ENCODE measurements at regions of chr9 and their contacts with region 1.

Region 1: GRCh38 chr9:6412487-6413364 is at the start of gene UHRF2:
- DNase-seq: peak; percentile 99 to 100
- ATAC-seq: peak; percentile 97
- H3K4me3 ChIP-seq: peak within 1 kb of the TSS; percentile 77 to 93
- H3K27ac ChIP-seq: peak within 1 kb of the TSS; percentile 46 to 71
- H3K4me1 ChIP-seq: no peaks in the 10 kb centered on the region
- H3K27me3 ChIP-seq: no peaks in the 10 kb centered on the region
- total RNA-seq, gene UHRF2: 38.2 to 60.3 TPM

Region 2: DNA sequence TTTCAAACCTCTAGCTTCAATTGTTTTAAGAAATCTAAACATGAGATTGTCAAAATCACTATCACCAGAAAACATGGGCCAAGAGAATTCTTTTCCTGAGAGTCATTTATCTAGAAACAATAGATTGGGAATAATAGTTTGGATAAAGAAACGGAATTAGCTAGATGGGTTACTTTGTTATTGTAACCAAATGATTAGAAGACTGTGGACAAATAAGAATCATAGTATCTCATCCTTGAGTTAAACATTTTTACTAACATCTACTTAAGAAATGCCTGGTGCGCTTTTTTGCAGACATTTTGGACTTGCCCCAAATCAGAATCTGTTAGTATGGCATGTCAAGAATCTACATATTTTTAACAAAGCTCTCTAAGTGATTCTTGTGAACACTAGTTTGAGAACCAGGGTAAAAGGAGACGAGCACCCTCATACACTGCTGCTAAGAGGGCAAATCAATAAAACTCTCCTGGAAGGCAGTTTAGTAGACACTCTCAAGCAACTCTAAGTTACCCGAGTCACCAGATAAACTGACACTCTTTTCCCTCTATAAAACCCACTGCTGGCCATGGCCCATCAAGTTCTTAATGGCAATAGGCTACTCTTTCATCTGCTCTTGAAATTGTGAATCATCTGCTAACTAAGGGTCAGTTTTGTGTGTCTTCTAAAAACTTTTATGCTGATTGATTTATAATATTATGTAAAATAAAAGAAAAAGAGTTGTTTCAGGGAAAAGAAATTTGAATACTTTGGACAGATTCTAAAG is 45.4 kb before region 1 on chr9:
- intact Hi-C with region 1: no loop called
- DNase-seq: no peak
- ATAC-seq: no peak
- H3K4me3 ChIP-seq: no peak overlapping the region
- H3K27ac ChIP-seq: no peak overlapping the region
- H3K4me1 ChIP-seq: no peaks in the 10 kb centered on the region
- H3K27me3 ChIP-seq: peaks cover 0 to 3% of the 10 kb centered on the region in 2 donors

Region 3: GRCh38 chr9:6383551-6384225 is 29.0 kb before region 1 on chr9:
- intact Hi-C with region 1: loop called in 1 of 2 experiments (anchors 2 kb)
- DNase-seq: peak in 1 of 2 donors; percentile 59
- ATAC-seq: no peak
- H3K4me3 ChIP-seq: no peak overlapping the region
- H3K27ac ChIP-seq: peak overlapping the region in 1 of 2 donors; percentile 28
- H3K4me1 ChIP-seq: no peaks in the 10 kb centered on the region
- H3K27me3 ChIP-seq: no peaks in the 10 kb centered on the region

Region 4: GRCh38 chr9:6566409-6567139 is 153.8 kb after region 1 on chr9:
- intact Hi-C with region 1: loop called in 1 of 2 experiments (anchors 5 kb)
- DNase-seq: peak; percentile 76 to 82
- ATAC-seq: peak; percentile 68
- H3K4me3 ChIP-seq: no peak overlapping the region
- H3K27ac ChIP-seq: no peak overlapping the region
- H3K4me1 ChIP-seq: peaks cover 2 to 3% of the 10 kb centered on the region in 2 donors
- H3K27me3 ChIP-seq: no peaks in the 10 kb centered on the region

Region 5: DNA sequence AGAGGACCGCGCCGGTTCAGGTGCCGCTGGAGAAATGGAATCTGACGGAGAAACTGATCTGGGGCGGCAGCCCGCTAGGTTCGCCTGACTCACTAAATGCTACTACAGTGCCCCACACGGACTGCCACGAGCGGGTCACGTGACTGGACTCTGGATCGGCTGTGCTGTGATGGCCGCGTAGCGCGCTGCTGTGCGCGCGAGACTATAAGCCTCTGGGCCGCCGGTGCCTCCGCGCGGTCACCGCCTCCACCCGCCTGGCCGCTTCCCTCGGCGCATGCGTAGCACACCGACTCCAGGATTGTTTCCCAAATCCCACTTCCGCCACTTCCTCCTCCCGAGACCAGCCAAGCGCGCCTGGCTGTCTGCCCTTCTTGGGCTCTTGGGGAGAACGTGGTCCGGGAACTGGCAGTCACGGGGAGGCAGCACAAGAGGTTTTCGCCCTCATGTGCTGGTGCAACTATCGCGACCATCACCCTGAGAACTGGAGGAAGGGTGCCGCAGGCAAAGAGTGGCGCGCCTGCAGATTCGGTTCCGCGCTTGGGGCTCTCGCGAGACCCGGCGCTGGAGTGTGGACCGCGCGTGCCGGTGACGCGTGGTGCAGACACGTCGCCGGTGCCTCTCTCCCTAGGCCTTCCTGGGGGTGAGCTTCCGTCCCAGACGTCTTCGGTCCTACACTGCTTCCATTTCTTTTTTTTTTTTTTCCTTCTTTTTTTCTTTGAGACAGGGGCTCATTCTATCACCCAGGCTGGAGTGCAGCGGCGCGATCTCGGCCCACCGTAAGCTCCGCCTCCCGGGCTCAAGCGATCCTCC is 268.6 kb after region 1 on chr9:
- intact Hi-C with region 1: loop called in 1 of 2 experiments (anchors 5 kb)
- DNase-seq: peak; percentile 98 to 99
- ATAC-seq: peak; percentile 99
- H3K4me3 ChIP-seq: peak overlapping the region; percentile 49 to 72
- H3K27ac ChIP-seq: peak overlapping the region; percentile 88 to 95
- H3K4me1 ChIP-seq: no peaks in the 10 kb centered on the region
- H3K27me3 ChIP-seq: no peaks in the 10 kb centered on the region

Measured in aorta (tissue), 5 donors.